ENCODE measurements at regions of chr11 and their contacts with region 1.

Region 1: GRCh38 chr11:106552694-106553203 is 465.5 kb downstream of the GUCY1A2 start:
- DNase-seq: no peak
- H3K4me3 ChIP-seq: no peak overlapping the region
- H3K27ac ChIP-seq: no peak overlapping the region
- H3K4me1 ChIP-seq: no peaks in the 10 kb centered on the region
- H3K27me3 ChIP-seq: peaks cover 2% of the 10 kb centered on the region
- CTCF ChIP-seq: peak in 1 of 2 donors; percentile 7

Region 2: GRCh38 chr11:106276859-106277436 is 275.8 kb before region 1 on chr11:
- CTCF ChIA-PET with region 1: no interaction called
- dilution Hi-C with region 1: no loop called
- in situ Hi-C with region 1: no loop called
- intact Hi-C with region 1: no loop called
- DNase-seq: no peak
- H3K4me3 ChIP-seq: no peak overlapping the region
- H3K27ac ChIP-seq: no peak overlapping the region
- H3K4me1 ChIP-seq: peaks cover 11% of the 10 kb centered on the region
- H3K27me3 ChIP-seq: no peaks in the 10 kb centered on the region
- CTCF ChIP-seq: peak; percentile 22 to 58

Region 3: DNA sequence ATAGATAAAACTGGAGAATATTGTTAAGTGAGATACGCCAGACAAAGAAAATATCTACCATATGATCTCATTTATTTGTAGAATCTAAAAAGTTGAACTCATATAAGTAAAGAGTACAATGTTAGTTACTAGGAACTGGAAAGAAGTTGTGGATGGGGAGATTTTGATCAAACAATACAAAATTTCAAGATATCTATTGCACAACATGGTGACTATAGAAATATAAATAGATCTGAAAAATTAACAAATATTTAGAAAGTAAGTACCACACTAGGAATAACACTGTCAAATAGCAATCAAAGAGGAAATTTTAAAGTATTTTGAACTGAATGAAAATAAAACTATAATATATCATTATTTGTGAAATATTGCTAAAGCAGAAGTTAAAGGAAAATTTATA is 38.0 kb before region 1 on chr11:
- CTCF ChIA-PET with region 1: no interaction called
- dilution Hi-C with region 1: loop called (anchors 5 kb)
- in situ Hi-C with region 1: no loop called
- intact Hi-C with region 1: no loop called
- DNase-seq: no peak
- H3K4me3 ChIP-seq: no peak overlapping the region
- H3K27ac ChIP-seq: no peak overlapping the region
- H3K4me1 ChIP-seq: no peaks in the 10 kb centered on the region
- H3K27me3 ChIP-seq: peaks cover 8% of the 10 kb centered on the region
- CTCF ChIP-seq: no peak

Region 4: DNA sequence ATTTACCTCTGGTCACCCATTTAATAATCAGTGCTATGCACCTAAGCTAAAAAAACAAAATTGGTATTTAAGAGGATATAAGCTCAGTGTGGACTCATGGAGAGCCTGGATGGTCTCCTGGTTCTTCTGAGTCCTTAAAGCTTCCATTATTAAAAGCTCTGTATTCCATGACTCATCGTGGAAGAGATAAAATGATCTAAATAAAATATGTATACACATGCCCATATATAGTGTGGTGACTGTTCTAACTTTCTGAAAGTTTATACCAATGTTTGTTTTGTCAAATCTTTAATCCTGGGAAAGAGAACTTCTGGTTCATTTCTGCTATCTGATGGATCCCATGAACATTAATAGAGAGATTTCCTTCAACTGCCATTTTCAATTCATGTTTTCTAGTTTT is 89.6 kb after region 1 on chr11:
- CTCF ChIA-PET with region 1: no interaction called
- dilution Hi-C with region 1: loop called (anchors 5 kb)
- in situ Hi-C with region 1: no loop called
- intact Hi-C with region 1: no loop called
- DNase-seq: no peak
- H3K4me3 ChIP-seq: no peak overlapping the region
- H3K27ac ChIP-seq: no peak overlapping the region
- H3K4me1 ChIP-seq: no peaks in the 10 kb centered on the region
- H3K27me3 ChIP-seq: no peaks in the 10 kb centered on the region
- CTCF ChIP-seq: no peak